Psoas muscle (tissue), 8 donors: ENCODE measurements at regions of chr1 and their contacts with region 1.

Region 1: DNA sequence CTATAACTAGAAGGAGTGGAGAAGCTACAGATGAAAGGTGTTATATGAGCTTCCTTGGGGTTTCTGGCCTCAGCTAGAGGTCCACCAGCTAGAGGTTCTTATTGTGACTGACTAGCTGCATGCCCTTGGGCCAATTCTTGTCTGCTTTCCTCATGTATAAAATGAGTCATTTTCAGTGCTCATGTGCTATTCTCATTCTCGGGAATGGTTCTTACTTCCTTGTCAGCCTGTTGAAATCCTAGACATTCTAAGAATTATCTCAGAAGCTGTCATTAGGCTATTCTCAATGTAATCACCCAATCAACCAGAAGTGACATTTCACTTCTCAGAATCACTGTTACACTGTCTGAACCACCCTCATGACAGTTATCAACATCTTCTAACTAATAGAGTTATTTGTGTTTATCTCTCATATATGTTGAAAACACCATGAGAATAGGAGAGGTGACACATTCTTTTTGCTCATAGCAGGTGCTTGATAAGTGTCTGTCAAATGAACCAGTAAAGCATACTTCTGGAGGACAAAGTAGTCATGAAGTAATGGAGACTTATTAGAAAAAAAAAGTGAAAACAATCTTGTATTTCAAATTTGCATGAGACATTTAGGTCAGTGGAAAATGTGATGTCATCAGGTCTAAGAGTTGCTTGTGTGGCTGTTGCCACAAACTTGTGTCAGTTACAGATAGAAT is 122.8 kb upstream of the IVNS1ABP start:
- DNase-seq: no peak
- ATAC-seq: peak; percentile 19 to 58 (median 42)
- H3K4me3 ChIP-seq: no peak overlapping the region
- H3K27ac ChIP-seq: peak overlapping the region; percentile 15
- H3K4me1 ChIP-seq: peaks cover 3% of the 10 kb centered on the region
- H3K27me3 ChIP-seq: no peaks in the 10 kb centered on the region
- CTCF ChIP-seq: no peak

Region 2: DNA sequence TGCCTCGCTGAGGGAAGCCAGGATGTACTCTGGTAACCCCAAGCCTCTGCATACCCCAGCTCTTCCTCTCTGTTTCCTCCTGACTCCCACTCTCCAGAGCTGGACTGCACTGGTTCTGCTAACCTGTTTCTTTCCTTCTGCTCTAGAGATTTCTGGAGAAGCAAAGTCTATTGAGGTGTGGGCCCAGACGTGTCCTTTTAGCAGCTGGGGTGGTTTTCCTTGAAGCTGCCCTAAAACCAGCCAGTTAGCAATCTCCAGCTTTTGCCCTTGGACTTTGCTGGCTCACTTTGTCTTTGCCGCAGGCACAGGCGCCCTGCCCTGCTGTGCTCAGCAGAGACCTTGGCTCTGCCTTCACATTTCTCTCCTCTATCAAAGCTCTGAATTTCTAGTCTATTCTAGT is 48.9 kb after region 1 on chr1:
- intact Hi-C with region 1: loop called in 1 of 2 experiments (anchors 5 kb)
- DNase-seq: peak in 1 of 2 donors; percentile 14
- ATAC-seq: peak in 2 of 4 donors; percentile 28 to 41
- H3K4me3 ChIP-seq: no peak overlapping the region
- H3K27ac ChIP-seq: no peak overlapping the region
- H3K4me1 ChIP-seq: peaks cover 25% of the 10 kb centered on the region
- H3K27me3 ChIP-seq: no peaks in the 10 kb centered on the region
- CTCF ChIP-seq: no peak

Region 3: GRCh38 chr1:185786524-185786923 is 346.7 kb after region 1 on chr1:
- intact Hi-C with region 1: no loop called
- DNase-seq: no peak
- ATAC-seq: no peak
- H3K4me3 ChIP-seq: no peak overlapping the region
- H3K27ac ChIP-seq: no peak overlapping the region
- H3K4me1 ChIP-seq: no peaks in the 10 kb centered on the region
- H3K27me3 ChIP-seq: no peaks in the 10 kb centered on the region
- CTCF ChIP-seq: no peak